Mammary epithelial cell (primary cell): ENCODE measurements at regions of chr7 and their contacts with region 1.

Region 1: DNA sequence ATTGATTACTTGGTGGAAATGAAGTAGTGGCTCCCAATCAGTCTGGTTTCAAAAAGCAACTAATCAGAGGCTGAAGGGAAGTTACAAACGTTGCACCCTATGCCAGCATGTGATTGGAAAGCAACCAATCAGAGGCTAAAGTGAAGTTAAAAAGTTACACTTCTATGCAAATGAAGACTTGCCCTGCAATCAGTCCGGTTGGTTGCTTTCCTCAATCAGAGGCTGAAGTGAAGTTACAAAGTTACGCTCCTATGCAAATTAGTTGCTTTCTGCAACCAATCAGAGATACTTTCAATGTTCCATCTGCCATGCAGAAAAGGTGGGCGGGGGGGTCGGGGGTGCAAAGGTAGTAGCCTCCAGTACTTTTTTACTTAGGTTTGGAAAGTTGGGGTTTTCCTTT is 1077.1 kb downstream of the TYW1 start:
- DNase-seq: no peak
- H3K4me3 ChIP-seq: no peak overlapping the region
- H3K27ac ChIP-seq: no peak overlapping the region
- H3K4me1 ChIP-seq: no peaks in the 10 kb centered on the region
- H3K27me3 ChIP-seq: no peaks in the 10 kb centered on the region
- CTCF ChIP-seq: no peak

Region 2: DNA sequence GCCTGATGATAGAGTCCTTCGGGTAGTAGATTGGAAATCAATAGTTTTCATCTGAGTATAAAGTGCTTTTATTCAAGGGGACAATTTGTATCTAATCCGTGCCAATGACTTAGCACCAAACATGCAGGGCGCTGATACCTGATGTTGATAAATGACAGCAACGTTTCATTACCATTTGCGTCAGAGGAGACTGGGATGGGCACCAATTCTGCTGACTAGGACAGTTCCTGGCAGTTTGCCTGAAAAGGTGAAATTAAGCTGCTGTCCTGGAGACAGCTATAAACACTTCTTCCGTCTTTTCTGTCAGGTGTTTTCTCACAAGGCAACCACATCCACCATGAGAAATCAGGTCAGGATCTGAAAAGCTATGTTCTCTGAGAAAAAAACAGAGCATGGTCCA is 59.3 kb after region 1 on chr7:
- CTCF ChIA-PET with region 1: no interaction called
- dilution Hi-C with region 1: loop called (anchors 5 kb)
- in situ Hi-C with region 1: no loop called
- intact Hi-C with region 1: no loop called
- DNase-seq: no peak
- H3K4me3 ChIP-seq: no peak overlapping the region
- H3K27ac ChIP-seq: no peak overlapping the region
- H3K4me1 ChIP-seq: no peaks in the 10 kb centered on the region
- H3K27me3 ChIP-seq: no peaks in the 10 kb centered on the region
- CTCF ChIP-seq: no peak